ENCODE measurements at regions of chr7 and their contacts with region 1.

Region 1: GRCh38 chr7:151744656-151745638 is 132.0 kb downstream of the PRKAG2 start:
- DNase-seq: no peak
- H3K4me3 Mint-ChIP-seq: no peak overlapping the region
- H3K27ac Mint-ChIP-seq: no peak overlapping the region
- H3K4me1 Mint-ChIP-seq: peaks cover 38% of the 10 kb centered on the region
- H3K27me3 Mint-ChIP-seq: no peaks in the 10 kb centered on the region

Region 2: GRCh38 chr7:151727579-151728285 is 17.2 kb before region 1 on chr7:
- CTCF ChIA-PET with region 1: interaction called, 3 read pairs
- intact Hi-C with region 1: loop called (anchors 1 kb)
- DNase-seq: peak; percentile 82
- H3K4me3 Mint-ChIP-seq: no peak overlapping the region
- H3K27ac Mint-ChIP-seq: no peak overlapping the region
- H3K4me1 Mint-ChIP-seq: peaks cover 15% of the 10 kb centered on the region
- H3K27me3 Mint-ChIP-seq: no peaks in the 10 kb centered on the region

Measured in activated naive CD4-positive, alpha-beta T cell treated with anti-CD3 and anti-CD28 coated beads for 36 hours (primary cell).